Adrenal gland (tissue), 19 donors: ENCODE measurements at regions of chr16 and their contacts with region 1.

Region 1: DNA sequence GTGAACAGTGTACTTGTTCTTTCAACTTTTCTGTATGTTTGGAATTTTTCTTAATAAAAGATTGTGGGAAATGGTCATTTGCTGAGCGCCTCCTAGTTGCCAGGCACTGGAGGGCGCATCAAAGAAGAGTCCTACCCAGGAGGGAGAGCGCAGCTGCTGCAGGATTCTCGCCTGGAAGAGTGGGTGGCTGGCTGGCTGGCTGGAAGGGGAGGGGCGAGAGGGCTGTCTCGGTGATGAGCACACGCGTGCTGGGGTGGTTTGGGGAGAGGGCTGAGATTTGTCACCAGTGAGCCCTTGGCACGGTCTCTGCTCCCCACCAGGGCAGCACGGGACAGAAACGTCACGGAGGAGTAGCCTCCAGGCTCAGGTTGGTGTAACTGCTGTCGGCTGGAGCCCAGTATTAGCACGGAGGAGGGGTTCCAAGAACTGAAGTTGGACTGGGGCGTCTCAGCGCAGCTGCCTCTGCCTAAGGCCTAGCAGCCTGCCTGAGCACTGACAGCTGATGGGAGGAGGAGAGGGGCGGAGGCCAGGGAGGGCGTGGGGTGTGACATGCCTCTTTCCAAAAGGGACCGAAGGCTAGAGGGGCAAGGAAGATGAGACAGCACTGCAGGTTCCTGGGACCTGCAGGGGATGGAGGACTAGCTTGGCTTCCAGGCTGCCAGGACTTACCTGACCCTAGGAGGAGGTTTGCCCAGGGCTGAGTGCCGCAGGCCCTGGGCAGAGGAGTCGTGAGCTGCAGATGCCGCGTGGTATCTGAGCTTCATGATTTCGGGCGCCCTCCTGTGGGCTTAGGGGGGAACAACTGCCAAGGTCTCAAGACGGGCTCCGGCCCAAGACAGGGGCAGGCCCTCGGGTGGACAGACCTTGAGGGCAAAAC is 5.7 kb downstream of the LDHD start:
- DNase-seq: peak; percentile 90 to 98 (median 96)
- H3K4me3 ChIP-seq: peak overlapping the region in 1 of 4 donors; percentile 1
- H3K27ac ChIP-seq: peak overlapping the region; percentile 49 to 93 (median 77)
- H3K4me1 ChIP-seq: peaks cover 32 to 72% of the 10 kb centered on the region in 2 donors
- H3K27me3 ChIP-seq: no peaks in the 10 kb centered on the region
- CTCF ChIP-seq: peak; percentile 87 to 97 (median 94)
- POLR2A ChIP-seq: no peak

Region 2: GRCh38 chr16:74813109-74813641 is 297.7 kb before region 1 on chr16:
- intact Hi-C with region 1: loop called in 1 of 2 experiments (anchors 10 kb)
- DNase-seq: peak; percentile 73 to 87 (median 82)
- H3K4me3 ChIP-seq: no peak overlapping the region
- H3K27ac ChIP-seq: no peak overlapping the region
- H3K4me1 ChIP-seq: no peaks in the 10 kb centered on the region
- H3K27me3 ChIP-seq: no peaks in the 10 kb centered on the region
- CTCF ChIP-seq: peak; percentile 89 to 96 (median 94)
- POLR2A ChIP-seq: no peak

Region 3: GRCh38 chr16:74984206-74984534 is 126.7 kb before region 1 on chr16:
- intact Hi-C with region 1: no loop called
- DNase-seq: no peak
- H3K4me3 ChIP-seq: peak overlapping the region in 3 of 4 donors; percentile 76 to 100 (median 83)
- H3K27ac ChIP-seq: peak overlapping the region in 2 of 5 donors; percentile 84
- H3K4me1 ChIP-seq: peaks cover 0 to 16% of the 10 kb centered on the region in 2 donors
- H3K27me3 ChIP-seq: no peaks in the 10 kb centered on the region
- CTCF ChIP-seq: no peak
- POLR2A ChIP-seq: no peak

Region 4: GRCh38 chr16:74998481-74999218 is 112.2 kb before region 1 on chr16 and contains the start of gene ZNRF1:
- intact Hi-C with region 1: loop called (anchors 5 kb)
- DNase-seq: peak; percentile 79 to 89 (median 85)
- H3K4me3 ChIP-seq: peak within 1 kb of the TSS; percentile 36 to 81 (median 55)
- H3K27ac ChIP-seq: peak within 1 kb of the TSS in 4 of 5 donors; percentile 59 to 88 (median 77)
- H3K4me1 ChIP-seq: peaks cover 25 to 46% of the 10 kb centered on the region in 2 donors
- H3K27me3 ChIP-seq: no peaks in the 10 kb centered on the region
- CTCF ChIP-seq: peak; percentile 69 to 94 (median 79)
- POLR2A ChIP-seq: peak; percentile 39 to 47
- total RNA-seq, gene ZNRF1: 10.9 to 29.2 (median 27.1) TPM

Region 5: GRCh38 chr16:75053791-75054555 is 56.9 kb before region 1 on chr16:
- intact Hi-C with region 1: loop called in 1 of 2 experiments (anchors 10 kb)
- DNase-seq: peak; percentile 59 to 82 (median 72)
- H3K4me3 ChIP-seq: no peak overlapping the region
- H3K27ac ChIP-seq: no peak overlapping the region
- H3K4me1 ChIP-seq: peaks cover 0 to 13% of the 10 kb centered on the region in 2 donors
- H3K27me3 ChIP-seq: no peaks in the 10 kb centered on the region
- CTCF ChIP-seq: no peak
- POLR2A ChIP-seq: no peak